ENCODE measurements at regions of chr17 and their contacts with region 1.

Region 1: DNA sequence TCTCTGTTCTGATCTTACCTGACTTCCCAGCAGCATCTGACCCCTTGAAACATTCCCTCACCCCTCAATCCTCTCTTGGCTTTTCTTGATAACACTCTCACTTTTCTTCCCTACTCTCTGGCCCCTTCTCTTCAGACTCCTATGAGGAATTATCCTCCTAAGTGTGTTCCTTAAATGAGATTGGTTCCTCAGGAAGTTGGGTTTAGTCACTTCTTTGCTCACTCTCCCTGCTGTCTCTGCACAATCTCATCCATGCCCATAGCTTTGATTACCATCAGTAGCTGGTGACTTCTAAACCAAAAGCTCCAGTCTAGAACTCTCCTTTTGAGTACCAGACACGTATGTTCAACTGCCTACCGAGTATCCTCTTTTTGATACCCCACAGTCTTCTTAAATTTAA is 13.0 kb downstream of the MED24 start:
- DNase-seq: no peak
- H3K4me3 ChIP-seq: no peak overlapping the region
- H3K27ac ChIP-seq: no peak overlapping the region
- H3K4me1 ChIP-seq: peaks cover 0 to 11% of the 10 kb centered on the region in 2 donors
- H3K27me3 ChIP-seq: no peaks in the 10 kb centered on the region
- CTCF ChIP-seq: no peak
- POLR2A ChIP-seq: no peak

Region 2: DNA sequence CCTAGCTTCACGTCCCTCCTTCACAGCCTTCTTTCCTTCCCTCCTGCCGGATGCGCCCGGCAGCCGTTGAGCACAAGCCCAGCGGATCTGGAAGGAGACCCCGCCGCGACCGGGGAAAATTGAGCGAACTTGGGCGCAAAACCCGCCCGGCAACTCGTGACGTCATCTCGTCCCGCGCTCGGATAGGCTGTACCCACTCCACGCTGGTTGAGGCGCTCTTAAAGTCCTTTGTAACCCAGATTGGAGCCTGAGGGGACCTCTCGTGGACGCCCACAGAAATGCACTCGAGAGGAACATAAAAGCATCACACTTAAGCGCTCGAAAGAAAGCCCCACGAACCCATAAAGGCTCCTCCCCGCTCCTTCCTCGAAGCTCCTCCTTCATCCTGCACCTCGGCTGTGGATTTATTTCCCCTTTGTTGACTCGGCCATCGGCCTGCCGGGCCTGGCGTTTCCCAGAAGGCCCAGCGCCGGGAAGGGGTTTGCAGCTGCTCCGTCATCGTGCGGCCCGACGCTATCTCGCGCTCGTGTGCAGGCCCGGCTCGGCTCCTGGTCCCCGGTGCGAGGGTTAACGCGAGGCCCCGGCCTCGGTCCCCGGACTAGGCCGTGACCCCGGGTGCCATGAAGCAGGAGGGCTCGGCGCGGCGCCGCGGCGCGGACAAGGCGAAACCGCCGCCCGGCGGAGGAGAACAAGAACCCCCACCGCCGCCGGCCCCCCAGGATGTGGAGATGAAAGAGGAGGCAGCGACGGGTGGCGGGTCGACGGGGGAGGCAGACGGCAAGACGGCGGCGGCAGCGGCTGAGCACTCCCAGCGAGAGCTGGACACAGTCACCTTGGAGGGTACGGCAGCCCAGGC is 60.6 kb before region 1 on chr17 and contains the start of gene PSMD3:
- intact Hi-C with region 1: loop called in 1 of 2 experiments (anchors 10 kb)
- DNase-seq: peak; percentile 97 to 100 (median 99)
- H3K4me3 ChIP-seq: peak within 1 kb of the TSS; percentile 75 to 88 (median 79)
- H3K27ac ChIP-seq: peak within 1 kb of the TSS; percentile 50 to 91 (median 88)
- H3K4me1 ChIP-seq: peaks cover 11 to 26% of the 10 kb centered on the region in 2 donors
- H3K27me3 ChIP-seq: no peaks in the 10 kb centered on the region
- CTCF ChIP-seq: peak; percentile 50 to 96 (median 92)
- POLR2A ChIP-seq: peak; percentile 78 to 91
- total RNA-seq, gene PSMD3: 78.8 to 123 (median 98.2) TPM

Region 3: DNA sequence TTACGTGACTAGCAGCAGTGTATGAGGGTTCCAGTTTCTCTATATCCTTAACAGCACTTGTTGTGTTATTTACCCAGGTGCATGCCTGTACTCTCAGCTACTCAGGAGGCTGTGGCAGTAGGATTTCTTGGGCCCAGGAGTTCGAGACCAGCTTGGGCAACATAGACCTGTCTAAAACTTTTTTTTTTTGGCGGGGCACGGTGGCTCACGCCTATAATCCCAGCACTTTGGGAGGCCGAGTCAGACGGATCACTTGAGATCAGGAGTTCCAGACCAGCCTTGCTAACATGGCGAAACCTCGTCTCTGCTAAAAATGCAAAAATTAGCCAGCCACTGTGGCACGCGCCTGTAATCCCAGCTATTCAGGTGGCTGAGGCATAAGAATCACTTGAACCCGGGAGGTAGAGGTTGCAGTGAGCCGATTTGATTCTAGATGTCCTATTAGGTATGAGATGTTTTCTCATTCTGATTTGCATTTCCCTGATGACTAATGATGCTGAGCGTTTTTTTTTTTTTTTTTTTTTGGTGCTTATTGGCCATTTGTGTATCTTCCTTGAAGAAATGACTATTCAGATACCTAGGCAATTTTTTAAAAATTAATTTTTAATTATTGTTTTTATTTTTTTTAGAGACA is 112.5 kb after region 1 on chr17:
- intact Hi-C with region 1: no loop called
- DNase-seq: peak in 1 of 7 donors; percentile 45
- H3K4me3 ChIP-seq: no peak overlapping the region
- H3K27ac ChIP-seq: no peak overlapping the region
- H3K4me1 ChIP-seq: peaks cover 5 to 30% of the 10 kb centered on the region in 2 donors
- H3K27me3 ChIP-seq: no peaks in the 10 kb centered on the region
- CTCF ChIP-seq: no peak
- POLR2A ChIP-seq: no peak

Region 4: GRCh38 chr17:40209404-40210093 is 168.4 kb after region 1 on chr17:
- intact Hi-C with region 1: no loop called
- DNase-seq: no peak
- H3K4me3 ChIP-seq: no peak overlapping the region
- H3K27ac ChIP-seq: no peak overlapping the region
- H3K4me1 ChIP-seq: no peaks in the 10 kb centered on the region
- H3K27me3 ChIP-seq: no peaks in the 10 kb centered on the region
- CTCF ChIP-seq: no peak
- POLR2A ChIP-seq: no peak

Region 5: DNA sequence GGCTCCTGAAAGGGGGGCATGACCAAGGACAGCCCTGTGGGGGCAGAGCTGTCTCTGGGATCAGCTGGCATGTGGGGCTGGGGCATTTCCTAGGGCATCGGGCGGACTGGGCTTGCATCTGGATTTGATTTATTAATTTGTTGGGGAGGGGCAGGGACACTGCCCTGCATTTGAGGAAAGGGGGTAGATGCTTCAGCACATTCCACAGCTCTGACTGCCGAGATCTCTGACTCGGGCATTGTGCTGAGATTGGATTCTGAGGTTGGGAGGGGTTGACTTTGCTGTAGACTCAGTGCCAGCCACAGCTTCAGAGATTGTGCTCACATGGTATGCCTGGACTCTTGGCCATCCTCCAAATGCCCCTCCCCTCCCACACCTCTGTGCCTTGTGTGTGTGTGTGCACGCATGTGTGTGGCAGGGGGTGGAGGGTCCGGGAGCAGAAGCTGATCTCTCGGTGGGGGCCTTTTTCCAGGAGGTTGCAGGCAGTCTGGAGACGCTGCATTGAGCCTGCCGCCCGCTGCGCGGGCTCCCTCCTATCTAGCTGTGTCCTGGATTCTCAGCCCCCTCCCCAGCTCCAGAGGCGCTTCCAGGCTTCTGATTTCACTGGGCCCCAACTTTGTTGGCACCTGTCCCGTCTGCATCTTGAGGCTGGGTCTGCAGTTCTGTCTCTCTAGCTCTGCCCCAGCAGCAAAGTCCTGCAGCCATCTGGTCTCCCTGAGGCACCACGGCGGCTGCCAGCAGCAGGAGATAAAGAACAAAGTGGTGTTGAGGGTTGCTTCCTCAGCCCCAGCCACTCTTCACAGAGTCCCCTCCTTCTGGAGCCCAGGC is 417.0 kb after region 1 on chr17:
- intact Hi-C with region 1: no loop called
- DNase-seq: peak in 1 of 7 donors; percentile 19
- H3K4me3 ChIP-seq: no peak overlapping the region
- H3K27ac ChIP-seq: peak overlapping the region in 2 of 5 donors; percentile 12 to 67
- H3K4me1 ChIP-seq: peaks cover 0 to 20% of the 10 kb centered on the region in 2 donors
- H3K27me3 ChIP-seq: no peaks in the 10 kb centered on the region
- CTCF ChIP-seq: no peak
- POLR2A ChIP-seq: no peak

Measured in adrenal gland (tissue), 19 donors.